ENCODE measurements at regions of chr17 and their contacts with region 1.

Region 1: GRCh38 chr17:8248751-8249607 is at the start of gene PFAS:
- DNase-seq: peak; percentile 97
- ATAC-seq: peak; percentile 71
- H3K4me3 Mint-ChIP-seq: peak within 1 kb of the TSS; percentile 96
- H3K27ac Mint-ChIP-seq: peak within 1 kb of the TSS; percentile 99
- H3K4me1 Mint-ChIP-seq: peaks cover 39% of the 10 kb centered on the region
- H3K27me3 Mint-ChIP-seq: no peaks in the 10 kb centered on the region
- total RNA-seq, gene PFAS: 78.3 to 80.2 TPM

Region 2: GRCh38 chr17:8156246-8156992 is 92.6 kb before region 1 on chr17:
- CTCF ChIA-PET with region 1: no interaction called
- POLR2A ChIA-PET with region 1: interaction called, 11 read pairs
- DNase-seq: peak; percentile 100
- ATAC-seq: peak; percentile 82
- H3K4me3 Mint-ChIP-seq: no peak overlapping the region
- H3K27ac Mint-ChIP-seq: no peak overlapping the region
- H3K4me1 Mint-ChIP-seq: peaks cover 36% of the 10 kb centered on the region
- H3K27me3 Mint-ChIP-seq: no peaks in the 10 kb centered on the region

Region 3: GRCh38 chr17:8209909-8210760 is 38.8 kb before region 1 on chr17 and contains the start of gene AURKB:
- CTCF ChIA-PET with region 1: interaction called, 3 read pairs
- POLR2A ChIA-PET with region 1: interaction called, 29 read pairs
- DNase-seq: peak; percentile 96
- ATAC-seq: peak; percentile 97
- H3K4me3 Mint-ChIP-seq: peak within 1 kb of the TSS; percentile 99
- H3K27ac Mint-ChIP-seq: peak within 1 kb of the TSS; percentile 99
- H3K4me1 Mint-ChIP-seq: peaks cover 41% of the 10 kb centered on the region
- H3K27me3 Mint-ChIP-seq: no peaks in the 10 kb centered on the region
- total RNA-seq, gene AURKB: 182 to 210 TPM

Region 4: DNA sequence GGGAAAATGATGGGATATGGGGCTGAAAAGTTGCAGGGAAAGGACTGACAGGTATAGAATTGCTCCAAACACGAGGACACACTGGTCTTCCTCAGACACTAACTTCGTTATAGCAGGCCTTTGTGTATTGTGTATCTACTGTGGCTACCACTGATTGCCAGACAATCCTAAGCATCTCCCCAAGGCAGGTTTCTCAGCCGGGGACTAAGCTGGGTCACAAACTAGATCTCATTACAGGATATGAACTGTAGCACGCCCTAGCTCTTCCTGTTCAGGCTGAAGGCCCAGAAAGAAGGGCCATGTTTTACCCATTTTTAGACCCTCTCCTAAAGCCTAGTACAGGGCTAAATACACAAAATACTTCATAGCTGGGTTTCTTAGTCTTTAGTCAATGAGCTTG is 34.4 kb after region 1 on chr17:
- CTCF ChIA-PET with region 1: interaction called, 4 read pairs
- POLR2A ChIA-PET with region 1: interaction called, 39 read pairs
- DNase-seq: no peak
- ATAC-seq: no peak
- H3K4me3 Mint-ChIP-seq: no peak overlapping the region
- H3K27ac Mint-ChIP-seq: peak overlapping the region; percentile 30
- H3K4me1 Mint-ChIP-seq: peaks cover 21% of the 10 kb centered on the region
- H3K27me3 Mint-ChIP-seq: no peaks in the 10 kb centered on the region

Region 5: DNA sequence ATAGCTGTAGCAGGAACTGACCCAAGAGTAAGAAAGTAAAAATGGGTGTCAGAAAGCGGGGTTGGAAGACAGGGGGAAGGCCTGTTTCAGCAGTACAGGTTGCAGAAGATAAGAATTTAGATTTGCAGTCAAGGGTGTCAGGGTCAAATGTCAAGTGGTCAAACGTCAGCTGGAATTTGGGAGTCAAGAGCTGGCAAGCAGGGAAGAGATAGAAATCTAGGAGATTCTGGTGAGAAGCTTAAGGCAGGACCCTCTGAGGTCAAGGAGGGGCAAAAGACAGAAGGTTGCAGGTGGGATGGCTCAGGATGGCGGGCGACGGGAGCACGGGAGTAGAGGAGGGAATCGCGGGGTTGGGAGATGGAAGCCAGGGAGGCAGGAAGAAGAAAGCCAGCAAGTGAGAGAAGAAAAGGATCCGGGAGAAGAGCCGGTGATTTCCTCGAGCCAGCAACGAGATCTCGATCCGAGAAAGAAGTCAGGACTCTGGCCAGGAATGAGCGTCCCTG is 45.9 kb after region 1 on chr17:
- CTCF ChIA-PET with region 1: interaction called, 17 read pairs
- POLR2A ChIA-PET with region 1: interaction called, 50 read pairs
- DNase-seq: no peak
- ATAC-seq: no peak
- H3K4me3 Mint-ChIP-seq: peak overlapping the region; percentile 84
- H3K27ac Mint-ChIP-seq: peak overlapping the region; percentile 90
- H3K4me1 Mint-ChIP-seq: peaks cover 48% of the 10 kb centered on the region
- H3K27me3 Mint-ChIP-seq: no peaks in the 10 kb centered on the region

Region 6: DNA sequence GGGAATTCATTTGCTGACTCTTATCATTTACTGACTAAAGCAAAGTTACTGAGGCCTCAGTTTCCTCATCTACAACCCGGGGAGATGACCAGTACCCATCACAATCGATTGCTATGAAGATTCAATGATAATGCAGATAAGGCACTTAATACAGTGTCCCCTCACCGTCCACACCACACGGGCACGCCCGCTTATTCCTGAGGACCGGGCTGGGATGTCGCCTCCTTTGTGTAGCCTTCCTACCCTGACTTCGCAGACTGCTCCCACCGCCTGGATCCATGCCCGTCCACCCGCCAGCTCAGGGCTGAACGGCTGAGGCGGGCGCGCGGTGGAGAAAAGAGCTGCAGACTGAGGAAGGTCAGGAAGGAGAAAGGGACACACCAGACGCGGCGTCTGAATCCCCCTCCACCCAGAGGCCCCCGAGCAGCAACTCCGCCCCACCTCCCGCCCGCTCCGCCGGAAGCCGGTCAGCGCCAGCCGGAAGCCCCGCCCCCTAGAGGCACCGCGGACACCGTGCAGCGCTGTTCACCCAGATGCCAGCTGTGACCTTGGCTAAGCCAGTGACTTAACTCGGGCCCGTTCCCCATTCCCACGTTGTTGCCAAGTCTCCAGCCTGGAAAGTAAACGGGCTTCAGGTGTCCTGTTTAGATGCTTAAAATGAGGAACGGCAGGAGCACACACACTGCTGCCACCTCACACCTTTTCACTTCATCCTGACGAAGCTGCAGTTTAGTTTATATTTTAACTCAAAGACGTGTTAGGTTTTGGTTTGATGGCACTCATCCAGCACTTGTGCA is 127.5 kb after region 1 on chr17 and contains the start of gene KRABD2:
- CTCF ChIA-PET with region 1: interaction called, 4 read pairs
- POLR2A ChIA-PET with region 1: interaction called, 10 read pairs
- DNase-seq: peak; percentile 94
- ATAC-seq: peak; percentile 97
- H3K4me3 Mint-ChIP-seq: peak within 1 kb of the TSS; percentile 90
- H3K27ac Mint-ChIP-seq: peak within 1 kb of the TSS; percentile 78
- H3K4me1 Mint-ChIP-seq: peaks cover 61% of the 10 kb centered on the region
- H3K27me3 Mint-ChIP-seq: no peaks in the 10 kb centered on the region